HCT116 (cell line): ENCODE measurements at regions of chr4 and their contacts with region 1.

Region 1: DNA sequence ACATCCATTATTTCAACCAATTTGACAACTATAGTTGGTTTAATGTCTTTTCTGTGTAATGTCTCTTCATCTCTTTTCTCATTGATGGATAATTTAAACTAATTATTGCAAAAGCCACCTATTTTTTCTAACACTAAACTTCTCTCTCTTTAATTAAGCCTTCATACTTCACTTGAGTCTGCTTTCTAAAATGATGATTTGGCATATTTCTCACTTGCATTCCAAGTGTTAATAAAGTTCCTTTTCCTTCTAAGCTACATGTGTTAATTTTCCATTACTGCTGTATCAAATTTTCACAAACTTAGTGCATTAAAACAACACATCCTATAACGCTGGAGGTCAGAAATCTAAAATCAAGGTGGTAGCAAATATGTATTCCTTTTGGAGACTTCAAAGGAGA is 1743.8 kb upstream of the PCDH7 start:
- DNase-seq: no peak
- ATAC-seq: no peak
- H3K4me3 ChIP-seq: no peak overlapping the region
- H3K27ac ChIP-seq: no peak overlapping the region
- H3K4me1 ChIP-seq: no peaks in the 10 kb centered on the region
- H3K27me3 ChIP-seq: no peaks in the 10 kb centered on the region
- CTCF ChIP-seq: no peak
- POLR2A ChIP-seq: no peak
- RAD21 ChIP-seq: no peak

Region 2: DNA sequence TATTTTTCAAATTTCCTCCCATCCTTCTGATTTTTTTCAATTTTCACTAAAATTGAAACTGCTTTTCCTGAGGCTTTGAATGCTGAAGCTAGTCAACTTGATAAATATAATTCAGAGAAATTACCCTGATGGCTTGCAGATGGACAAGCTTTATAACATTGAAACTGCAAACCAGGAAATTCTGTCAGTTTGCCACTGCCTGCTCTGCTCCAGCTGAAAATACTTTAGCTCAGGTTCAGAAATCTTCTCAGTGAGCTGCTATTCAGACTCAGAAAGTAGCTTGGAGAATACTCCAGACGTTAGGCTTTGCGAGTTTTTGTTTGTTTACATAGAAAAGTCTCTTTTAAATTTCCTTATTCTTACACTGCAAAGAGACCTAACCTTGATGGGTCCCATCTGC is 541.1 kb before region 1 on chr4:
- CTCF ChIA-PET with region 1: no interaction called
- POLR2A ChIA-PET with region 1: no interaction called
- RAD21 ChIA-PET with region 1: no interaction called
- intact Hi-C with region 1: loop called (anchors 5 kb)
- DNase-seq: no peak
- ATAC-seq: no peak
- H3K4me3 ChIP-seq: no peak overlapping the region
- H3K27ac ChIP-seq: no peak overlapping the region
- H3K4me1 ChIP-seq: peaks cover 0 to 6% of the 10 kb centered on the region in 2 experiments; a peak in 1 of 4 replicates
- H3K27me3 ChIP-seq: no peaks in the 10 kb centered on the region
- CTCF ChIP-seq: no peak
- POLR2A ChIP-seq: no peak
- RAD21 ChIP-seq: no peak